IMR-90 (cell line): ENCODE measurements at regions of chr14 and their contacts with region 1.

Region 1: GRCh38 chr14:91919814-91920213 is 27.7 kb downstream of the FBLN5 start:
- DNase-seq: peak; percentile 63
- ATAC-seq: peak; percentile 80
- H3K4me3 ChIP-seq: no peak overlapping the region
- H3K27ac ChIP-seq: peak overlapping the region; percentile 23; the same call in 1 of the 2 replicates
- H3K4me1 ChIP-seq: peaks cover 4% of the 10 kb centered on the region
- H3K27me3 ChIP-seq: no peaks in the 10 kb centered on the region
- CTCF ChIP-seq: no peak
- POLR2A ChIP-seq: no peak
- RAD21 ChIP-seq: no peak

Region 2: GRCh38 chr14:91793704-91794103 is 126.1 kb before region 1 on chr14:
- CTCF ChIA-PET with region 1: no interaction called
- POLR2A ChIA-PET with region 1: no interaction called
- dilution Hi-C with region 1: no loop called
- in situ Hi-C with region 1: no loop called
- intact Hi-C with region 1: no loop called
- DNase-seq: no peak
- ATAC-seq: no peak
- H3K4me3 ChIP-seq: no peak overlapping the region
- H3K27ac ChIP-seq: no peak overlapping the region
- H3K4me1 ChIP-seq: no peaks in the 10 kb centered on the region
- H3K27me3 ChIP-seq: no peaks in the 10 kb centered on the region
- CTCF ChIP-seq: no peak
- POLR2A ChIP-seq: no peak
- RAD21 ChIP-seq: no peak

Region 3: DNA sequence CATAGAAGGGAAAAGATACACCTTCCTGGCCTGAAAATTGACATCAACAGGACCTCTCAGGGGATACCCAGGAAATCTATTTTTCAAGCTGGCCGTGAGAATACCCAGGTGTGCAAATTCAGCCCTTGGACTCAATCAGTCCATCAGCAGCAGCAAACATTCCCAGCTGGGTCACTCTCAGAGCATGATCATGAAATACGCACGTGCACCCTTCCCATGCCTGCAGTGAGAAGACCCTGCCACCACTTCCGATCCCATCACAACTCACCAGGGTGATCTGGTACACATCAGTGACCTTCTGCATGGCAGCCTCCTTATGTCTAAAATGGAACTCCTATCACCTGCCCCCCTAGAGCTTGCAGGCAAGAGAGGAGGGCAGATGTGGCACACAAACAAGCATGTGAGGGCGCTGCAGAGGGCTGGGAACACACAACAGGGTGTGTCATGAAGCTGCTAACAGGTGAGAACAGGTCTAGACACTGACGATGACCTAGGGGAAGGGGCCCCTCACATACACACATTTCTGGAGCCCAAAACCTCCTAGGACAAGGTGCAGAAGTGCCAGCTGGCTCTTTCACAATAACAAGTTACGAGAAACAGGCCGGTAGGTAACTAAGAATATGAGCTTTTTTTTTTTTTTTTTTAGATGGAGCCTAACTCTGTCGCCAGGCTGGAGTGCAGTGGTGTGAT is 14.7 kb before region 1 on chr14:
- CTCF ChIA-PET with region 1: no interaction called
- POLR2A ChIA-PET with region 1: interaction called, 23 read pairs
- dilution Hi-C with region 1: no loop called
- in situ Hi-C with region 1: no loop called
- intact Hi-C with region 1: no loop called
- DNase-seq: no peak
- ATAC-seq: no peak
- H3K4me3 ChIP-seq: no peak overlapping the region
- H3K27ac ChIP-seq: no peak overlapping the region
- H3K4me1 ChIP-seq: peaks cover 1% of the 10 kb centered on the region; the same call in 1 of the 2 replicates
- H3K27me3 ChIP-seq: no peaks in the 10 kb centered on the region
- CTCF ChIP-seq: no peak
- POLR2A ChIP-seq: no peak
- RAD21 ChIP-seq: no peak

Region 4: GRCh38 chr14:91956616-91957015 is 36.8 kb after region 1 on chr14:
- CTCF ChIA-PET with region 1: no interaction called
- POLR2A ChIA-PET with region 1: no interaction called
- dilution Hi-C with region 1: no loop called
- in situ Hi-C with region 1: no loop called
- intact Hi-C with region 1: no loop called
- DNase-seq: no peak
- ATAC-seq: no peak
- H3K4me3 ChIP-seq: no peak overlapping the region
- H3K27ac ChIP-seq: no peak overlapping the region
- H3K4me1 ChIP-seq: no peaks in the 10 kb centered on the region; the same call in 1 of the 2 replicates
- H3K27me3 ChIP-seq: peaks cover 2% of the 10 kb centered on the region; the same call in 1 of the 2 replicates
- CTCF ChIP-seq: no peak
- POLR2A ChIP-seq: no peak
- RAD21 ChIP-seq: no peak